ENCODE measurements at regions of chr20 and their contacts with region 1.

Region 1: GRCh38 chr20:15654208-15654645 is 919.0 kb downstream of the KIF16B start:
- DNase-seq: no peak

Region 2: DNA sequence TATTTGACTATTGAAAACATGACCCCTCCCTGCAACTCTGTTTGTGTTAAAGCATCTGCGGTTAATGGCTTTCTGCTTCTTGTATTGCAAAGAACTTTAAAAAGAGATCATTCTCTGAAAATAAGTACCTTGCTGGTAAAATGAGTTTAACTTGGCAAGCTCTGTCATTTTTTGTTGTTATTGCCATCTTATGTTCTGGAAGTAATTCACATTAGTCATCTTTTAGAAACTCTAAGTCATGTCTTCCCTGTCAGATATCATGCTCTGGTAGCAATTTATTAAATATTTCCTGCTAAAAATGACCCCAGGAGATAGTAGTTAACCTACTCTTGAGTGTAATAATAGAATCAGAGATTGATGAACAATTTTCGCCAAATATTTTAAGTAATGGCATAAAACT is 28.5 kb after region 1 on chr20:
- intact Hi-C with region 1: loop called in 1 of 2 experiments (anchors 1 kb)
- DNase-seq: no peak

Measured in posterior vena cava (tissue), 2 donors.